ENCODE measurements at regions of chr11 and their contacts with region 1.

Region 1: DNA sequence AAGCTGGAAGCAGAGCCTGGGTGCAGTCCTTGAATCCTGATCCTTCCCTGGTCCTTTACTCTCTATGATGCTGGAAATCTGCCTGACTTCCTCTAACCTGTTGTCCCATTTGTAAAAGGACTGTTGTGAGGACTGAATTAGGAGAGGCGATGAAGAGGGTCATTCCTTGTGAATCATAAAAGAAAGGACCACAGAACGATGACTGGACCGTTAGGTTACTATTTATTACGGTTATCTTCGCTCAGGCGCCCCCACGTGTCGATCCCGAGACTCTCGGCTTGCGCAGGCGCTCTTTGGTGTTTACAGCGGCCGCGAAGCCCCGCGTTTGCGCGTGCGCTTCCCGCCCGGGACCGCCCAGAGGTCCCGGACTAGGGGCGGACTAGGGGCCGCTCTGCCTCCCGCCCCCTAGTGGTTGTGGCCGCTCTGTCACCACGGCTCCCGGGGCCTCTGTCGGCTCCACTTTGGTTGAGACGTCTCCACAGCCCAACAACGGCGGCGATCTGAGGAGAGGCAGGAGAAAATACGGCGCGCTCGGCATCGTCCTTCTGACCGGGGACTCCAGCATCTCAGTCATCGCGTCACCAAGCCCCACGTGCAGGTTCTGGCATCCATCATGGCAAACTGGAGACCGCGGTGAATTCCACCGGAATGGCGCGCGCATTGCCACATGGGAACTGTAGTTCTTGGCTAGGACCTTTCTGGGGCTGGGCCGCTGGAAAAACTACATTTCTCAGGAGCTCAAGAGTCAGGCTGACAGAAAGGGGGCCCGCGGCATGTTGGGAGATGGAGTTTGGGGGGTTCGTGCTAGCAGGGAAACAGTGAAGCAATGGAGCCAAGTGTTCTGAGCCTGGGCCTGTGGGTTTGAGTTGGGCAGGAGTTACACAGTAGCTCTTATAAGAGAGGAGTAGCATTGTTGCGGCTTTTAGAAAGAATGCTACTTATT is at the start of gene STARD10:
- DNase-seq: peak; percentile 98
- ATAC-seq: peak; percentile 94
- H3K4me3 ChIP-seq: peak within 1 kb of the TSS; percentile 60 to 98 (median 85)
- H3K4me3 Mint-ChIP-seq: peak within 1 kb of the TSS; percentile 99
- H3K27ac ChIP-seq: peak within 1 kb of the TSS; percentile 94 to 97
- H3K27ac Mint-ChIP-seq: peak within 1 kb of the TSS; percentile 100
- H3K4me1 ChIP-seq: peaks cover 19 to 28% of the 10 kb centered on the region in 2 donors
- H3K4me1 Mint-ChIP-seq: peaks cover 36% of the 10 kb centered on the region
- H3K27me3 ChIP-seq: no peaks in the 10 kb centered on the region
- H3K27me3 Mint-ChIP-seq: no peaks in the 10 kb centered on the region
- CTCF ChIP-seq: peak; percentile 94
- total RNA-seq, gene STARD10: 29.4 and 39.2 TPM in 2 replicates

Region 2: GRCh38 chr11:72722050-72722748 is 71.5 kb before region 1 on chr11:
- CTCF ChIA-PET with region 1: interaction called, 390 read pairs
- POLR2A ChIA-PET with region 1: interaction called, 35 read pairs
- intact Hi-C with region 1: loop called (anchors 1 kb)
- DNase-seq: peak; percentile 93
- ATAC-seq: peak; percentile 85
- H3K4me3 ChIP-seq: peak overlapping the region; percentile 36 to 74 (median 50)
- H3K4me3 Mint-ChIP-seq: peak overlapping the region; percentile 95
- H3K27ac ChIP-seq: peak overlapping the region; percentile 65 to 81
- H3K27ac Mint-ChIP-seq: peak overlapping the region; percentile 94
- H3K4me1 ChIP-seq: peaks cover 55 to 77% of the 10 kb centered on the region in 2 donors
- H3K4me1 Mint-ChIP-seq: peaks cover 76% of the 10 kb centered on the region
- H3K27me3 ChIP-seq: no peaks in the 10 kb centered on the region
- H3K27me3 Mint-ChIP-seq: no peaks in the 10 kb centered on the region
- CTCF ChIP-seq: no peak

Region 3: DNA sequence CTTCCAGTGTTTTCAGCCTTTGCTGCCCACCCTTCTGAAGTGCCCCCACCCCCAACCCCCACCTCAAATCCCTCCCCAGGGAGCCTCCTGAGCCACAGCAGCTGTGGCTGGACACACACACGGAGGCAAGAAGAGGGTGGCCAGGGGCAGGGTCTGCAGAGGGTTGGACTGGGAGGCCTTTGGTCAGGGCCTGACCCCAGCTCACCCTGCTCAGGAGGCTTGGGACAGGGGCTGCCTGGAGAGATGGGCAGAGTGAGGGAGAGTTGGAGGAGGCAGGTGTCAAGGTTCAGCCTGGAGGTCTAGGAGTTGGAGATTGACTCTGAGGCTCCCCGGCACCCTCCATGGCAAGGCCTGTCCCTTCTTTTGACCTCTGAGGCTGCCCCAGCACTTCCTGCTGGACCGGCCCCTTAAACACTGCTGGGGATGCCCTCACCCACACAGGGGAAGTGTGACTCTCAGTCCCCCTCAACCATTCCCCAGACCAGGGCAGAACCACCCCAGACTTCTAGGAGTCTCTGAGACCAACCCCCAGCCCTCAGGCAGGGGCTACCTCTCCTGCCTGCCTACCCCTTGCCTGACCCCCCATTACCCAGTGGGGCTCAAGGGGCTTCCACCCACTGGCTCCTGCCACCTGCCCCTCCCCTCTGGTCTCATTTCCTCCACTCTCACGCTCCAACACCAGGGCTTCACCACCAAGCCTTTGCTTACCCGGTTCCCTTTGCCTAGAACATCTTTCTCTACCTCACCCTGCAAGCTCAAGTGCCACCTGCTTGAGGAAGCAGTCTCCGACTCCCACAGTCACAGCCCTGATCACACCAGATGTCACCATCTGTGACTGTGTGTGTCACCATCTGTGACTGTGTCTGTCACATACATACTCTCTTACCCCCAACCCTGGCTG is 50.1 kb before region 1 on chr11:
- CTCF ChIA-PET with region 1: interaction called, 390 read pairs
- POLR2A ChIA-PET with region 1: interaction called, 4 read pairs
- intact Hi-C with region 1: loop called (anchors 1 kb)
- DNase-seq: peak; percentile 90
- ATAC-seq: peak; percentile 81
- H3K4me3 ChIP-seq: no peak overlapping the region
- H3K4me3 Mint-ChIP-seq: peak overlapping the region; percentile 69
- H3K27ac ChIP-seq: peak overlapping the region; percentile 97 to 99
- H3K27ac Mint-ChIP-seq: peak overlapping the region; percentile 91
- H3K4me1 ChIP-seq: peaks cover 87 to 94% of the 10 kb centered on the region in 2 donors
- H3K4me1 Mint-ChIP-seq: peaks cover 89% of the 10 kb centered on the region
- H3K27me3 ChIP-seq: no peaks in the 10 kb centered on the region
- H3K27me3 Mint-ChIP-seq: no peaks in the 10 kb centered on the region
- CTCF ChIP-seq: no peak

Region 4: GRCh38 chr11:72781313-72782050 is 12.2 kb before region 1 on chr11:
- CTCF ChIA-PET with region 1: interaction called, 27 read pairs
- POLR2A ChIA-PET with region 1: interaction called, 6 read pairs
- intact Hi-C with region 1: no loop called
- DNase-seq: peak; percentile 77
- ATAC-seq: peak; percentile 87
- H3K4me3 ChIP-seq: peak overlapping the region; percentile 4 to 77 (median 61)
- H3K4me3 Mint-ChIP-seq: peak overlapping the region; percentile 81
- H3K27ac ChIP-seq: peak overlapping the region in 1 of 2 donors; percentile 56
- H3K27ac Mint-ChIP-seq: peak overlapping the region; percentile 51
- H3K4me1 ChIP-seq: peaks cover 25 to 29% of the 10 kb centered on the region in 2 donors
- H3K4me1 Mint-ChIP-seq: peaks cover 37% of the 10 kb centered on the region
- H3K27me3 ChIP-seq: no peaks in the 10 kb centered on the region
- H3K27me3 Mint-ChIP-seq: no peaks in the 10 kb centered on the region
- CTCF ChIP-seq: no peak

Region 5: GRCh38 chr11:72814286-72815109 is 20.8 kb after region 1 on chr11 and contains the start of gene ATG16L2:
- CTCF ChIA-PET with region 1: interaction called, 26 read pairs
- POLR2A ChIA-PET with region 1: interaction called, 39 read pairs
- intact Hi-C with region 1: loop called (anchors 1 kb)
- DNase-seq: no peak
- ATAC-seq: peak; percentile 80
- H3K4me3 ChIP-seq: peak within 1 kb of the TSS; percentile 94 to 99 (median 98)
- H3K4me3 Mint-ChIP-seq: peak within 1 kb of the TSS; percentile 99
- H3K27ac ChIP-seq: peak within 1 kb of the TSS; percentile 95 to 98
- H3K27ac Mint-ChIP-seq: peak within 1 kb of the TSS; percentile 98
- H3K4me1 ChIP-seq: peaks cover 18 to 36% of the 10 kb centered on the region in 2 donors
- H3K4me1 Mint-ChIP-seq: peaks cover 45% of the 10 kb centered on the region
- H3K27me3 ChIP-seq: no peaks in the 10 kb centered on the region
- H3K27me3 Mint-ChIP-seq: no peaks in the 10 kb centered on the region
- CTCF ChIP-seq: peak; percentile 34
- total RNA-seq, gene ATG16L2: 212 and 228 TPM in 2 replicates

Region 6: GRCh38 chr11:72875736-72876135 is 82.0 kb after region 1 on chr11:
- CTCF ChIA-PET with region 1: no interaction called
- POLR2A ChIA-PET with region 1: no interaction called
- intact Hi-C with region 1: no loop called
- DNase-seq: no peak
- ATAC-seq: no peak
- H3K4me3 ChIP-seq: no peak overlapping the region
- H3K4me3 Mint-ChIP-seq: no peak overlapping the region
- H3K27ac ChIP-seq: peak overlapping the region in 1 of 2 donors; percentile 53
- H3K27ac Mint-ChIP-seq: peak overlapping the region; percentile 74
- H3K4me1 ChIP-seq: no peaks in the 10 kb centered on the region
- H3K4me1 Mint-ChIP-seq: peaks cover 7% of the 10 kb centered on the region
- H3K27me3 ChIP-seq: no peaks in the 10 kb centered on the region
- H3K27me3 Mint-ChIP-seq: no peaks in the 10 kb centered on the region
- CTCF ChIP-seq: no peak

Measured in B cell (primary cell).